Dendritic cell treated with granulocyte-macrophage colony-stimulating factor and Interleukin-4, amounts not matched to agents 40 ng/mL and 50 ng/mL, for 4 days (primary cell): ENCODE measurements at regions of chr3 and their contacts with region 1.

Region 1: DNA sequence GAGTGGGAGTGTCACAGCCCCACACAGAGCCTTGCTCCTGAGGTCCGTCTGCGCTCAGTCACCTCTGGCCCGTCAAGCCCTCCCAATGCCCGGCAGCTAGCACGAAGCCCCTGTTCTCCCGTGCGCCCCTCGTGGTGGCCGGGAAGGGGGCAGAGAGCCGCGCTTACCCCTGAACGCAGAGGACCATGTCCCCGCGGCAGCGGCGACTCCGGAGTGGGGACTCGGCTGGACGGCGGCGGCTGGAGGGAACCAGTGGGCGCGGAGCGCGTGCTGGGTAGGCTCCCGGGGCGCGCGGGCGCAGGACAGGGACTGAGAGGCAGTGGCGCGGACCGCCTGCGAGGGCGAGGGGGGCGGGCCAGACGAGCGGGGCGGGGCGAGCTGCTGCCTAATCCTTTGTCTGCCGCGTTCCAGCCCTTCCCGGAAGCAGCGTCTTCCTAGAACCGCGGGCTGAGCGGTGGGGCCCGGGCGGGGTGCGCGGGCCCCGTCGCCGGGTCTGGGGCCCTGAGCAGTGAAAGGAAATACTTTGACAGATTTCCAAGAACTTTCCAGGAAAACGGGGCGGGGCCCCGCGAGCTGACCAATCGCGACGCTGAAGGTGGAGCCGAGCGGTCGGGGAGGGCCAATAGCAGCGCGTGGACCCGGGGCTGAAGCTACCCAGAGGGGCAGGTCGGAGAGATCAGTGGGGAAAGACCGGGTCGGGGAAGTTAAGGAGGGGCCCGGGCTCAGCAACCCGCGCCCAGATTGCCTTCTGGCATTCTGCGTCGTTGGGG is at the start of gene CISH:
- H3K4me3 Mint-ChIP-seq: peak within 1 kb of the TSS; percentile 99
- H3K27ac Mint-ChIP-seq: peak within 1 kb of the TSS; percentile 99
- H3K4me1 Mint-ChIP-seq: peaks cover 56% of the 10 kb centered on the region
- H3K27me3 Mint-ChIP-seq: no peaks in the 10 kb centered on the region

Region 2: GRCh38 chr3:50350527-50351322 is 260.9 kb before region 1 on chr3 and contains the starts of genes CYB561D2 and NPRL2:
- intact Hi-C with region 1: loop called (anchors 5 kb)
- H3K4me3 Mint-ChIP-seq: peak within 1 kb of the TSS; percentile 90
- H3K27ac Mint-ChIP-seq: peak within 1 kb of the TSS; percentile 93
- H3K4me1 Mint-ChIP-seq: peaks cover 84% of the 10 kb centered on the region
- H3K27me3 Mint-ChIP-seq: no peaks in the 10 kb centered on the region

Region 3: DNA sequence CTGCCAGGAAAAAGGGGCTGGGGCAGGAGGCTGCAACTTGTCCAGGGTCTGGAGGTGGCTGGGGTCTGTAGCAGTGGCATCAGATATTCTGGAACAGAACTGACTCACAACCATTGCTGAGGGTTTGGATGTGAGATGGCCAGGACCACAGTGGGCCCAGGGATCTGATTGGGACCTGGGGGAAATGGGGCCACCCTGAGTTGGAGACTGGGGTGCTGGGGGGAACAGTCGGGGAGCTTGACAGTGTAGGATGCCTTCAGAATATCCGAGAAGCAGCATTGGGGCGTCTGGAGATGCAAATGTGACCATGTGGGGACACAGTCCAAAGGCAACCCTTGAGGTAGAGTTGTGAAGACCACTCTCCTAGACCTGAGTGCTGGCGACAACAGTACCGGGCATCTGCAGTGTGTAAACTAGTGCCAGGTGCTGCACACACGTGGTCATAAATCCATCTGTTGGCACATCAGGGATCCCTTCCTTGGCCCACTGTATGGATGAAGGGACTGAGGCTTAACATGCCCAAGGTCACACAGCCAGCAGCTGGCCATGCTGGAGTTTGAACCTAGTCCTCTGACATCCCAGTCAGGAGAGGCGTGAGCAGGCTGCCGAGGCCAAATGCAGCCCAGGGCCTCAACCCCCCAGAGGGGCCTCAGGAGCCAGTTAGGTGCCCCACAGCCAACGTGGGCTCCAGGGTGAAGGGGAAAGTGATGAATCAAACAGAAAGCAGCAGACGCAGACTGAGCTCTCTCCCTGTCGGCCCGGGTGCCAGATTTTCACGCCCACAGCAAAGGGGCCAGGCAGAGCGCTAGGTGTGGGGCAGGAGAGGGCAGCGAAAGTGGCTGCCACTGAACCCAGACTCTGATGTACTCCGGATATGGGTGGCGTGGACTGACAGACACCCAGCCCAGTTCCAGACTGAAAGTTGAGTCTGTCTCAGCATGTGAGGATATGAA is 23.6 kb before region 1 on chr3:
- intact Hi-C with region 1: loop called (anchors 1 kb)
- H3K4me3 Mint-ChIP-seq: peak overlapping the region; percentile 35
- H3K27ac Mint-ChIP-seq: peak overlapping the region; percentile 98
- H3K4me1 Mint-ChIP-seq: peaks cover 96% of the 10 kb centered on the region
- H3K27me3 Mint-ChIP-seq: no peaks in the 10 kb centered on the region

Region 4: GRCh38 chr3:50652709-50653108 is 41.1 kb after region 1 on chr3:
- intact Hi-C with region 1: loop called (anchors 5 kb)
- H3K4me3 Mint-ChIP-seq: no peak overlapping the region
- H3K27ac Mint-ChIP-seq: peak overlapping the region; percentile 42
- H3K4me1 Mint-ChIP-seq: peaks cover 69% of the 10 kb centered on the region
- H3K27me3 Mint-ChIP-seq: peaks cover 2% of the 10 kb centered on the region

Region 5: DNA sequence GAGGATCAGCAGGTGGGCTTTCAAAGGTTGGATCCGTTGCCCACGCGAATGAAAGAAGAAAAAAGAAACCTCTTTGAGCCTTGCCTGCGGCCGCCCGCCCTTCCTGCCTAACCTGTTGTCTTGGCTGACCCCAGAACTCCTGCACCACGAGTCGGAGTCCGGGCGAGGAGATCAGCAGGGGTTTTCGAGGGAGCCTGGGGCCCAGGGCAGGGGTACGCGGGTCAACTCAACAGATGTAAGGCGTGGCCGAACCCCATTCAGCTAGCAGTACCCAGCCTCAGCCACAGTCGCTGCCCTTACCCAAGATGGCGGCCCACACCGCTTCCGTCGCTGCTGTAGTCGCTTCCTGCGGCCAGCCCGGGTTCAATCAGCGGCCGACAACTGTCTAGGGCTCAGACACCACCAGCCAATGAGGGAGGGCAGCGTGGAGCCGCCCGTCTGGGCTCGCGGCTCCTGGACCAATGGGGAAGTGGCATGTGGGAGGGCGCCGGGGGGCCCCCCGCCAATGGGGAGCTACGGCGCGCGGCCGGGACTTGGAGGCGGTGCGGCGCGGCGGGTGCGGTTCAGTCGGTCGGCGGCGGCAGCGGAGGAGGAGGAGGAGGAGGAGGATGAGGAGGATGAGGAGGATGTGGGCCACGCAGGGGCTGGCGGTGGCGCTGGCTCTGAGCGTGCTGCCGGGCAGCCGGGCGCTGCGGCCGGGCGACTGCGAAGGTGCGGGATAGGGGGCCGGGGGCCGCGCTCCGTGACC is 773.3 kb after region 1 on chr3 and contains the start of gene MANF:
- intact Hi-C with region 1: loop called (anchors 5 kb)
- H3K4me3 Mint-ChIP-seq: peak within 1 kb of the TSS; percentile 93
- H3K27ac Mint-ChIP-seq: peak within 1 kb of the TSS; percentile 99
- H3K4me1 Mint-ChIP-seq: peaks cover 60% of the 10 kb centered on the region
- H3K27me3 Mint-ChIP-seq: no peaks in the 10 kb centered on the region